Sciatic nerve (tissue), 2 donors: ENCODE measurements at regions of chr21 and their contacts with region 1.

Region 1: GRCh38 chr21:42760951-42761680 is 107.7 kb downstream of the PDE9A start:
- DNase-seq: no peak
- ATAC-seq: no peak

Region 2: DNA sequence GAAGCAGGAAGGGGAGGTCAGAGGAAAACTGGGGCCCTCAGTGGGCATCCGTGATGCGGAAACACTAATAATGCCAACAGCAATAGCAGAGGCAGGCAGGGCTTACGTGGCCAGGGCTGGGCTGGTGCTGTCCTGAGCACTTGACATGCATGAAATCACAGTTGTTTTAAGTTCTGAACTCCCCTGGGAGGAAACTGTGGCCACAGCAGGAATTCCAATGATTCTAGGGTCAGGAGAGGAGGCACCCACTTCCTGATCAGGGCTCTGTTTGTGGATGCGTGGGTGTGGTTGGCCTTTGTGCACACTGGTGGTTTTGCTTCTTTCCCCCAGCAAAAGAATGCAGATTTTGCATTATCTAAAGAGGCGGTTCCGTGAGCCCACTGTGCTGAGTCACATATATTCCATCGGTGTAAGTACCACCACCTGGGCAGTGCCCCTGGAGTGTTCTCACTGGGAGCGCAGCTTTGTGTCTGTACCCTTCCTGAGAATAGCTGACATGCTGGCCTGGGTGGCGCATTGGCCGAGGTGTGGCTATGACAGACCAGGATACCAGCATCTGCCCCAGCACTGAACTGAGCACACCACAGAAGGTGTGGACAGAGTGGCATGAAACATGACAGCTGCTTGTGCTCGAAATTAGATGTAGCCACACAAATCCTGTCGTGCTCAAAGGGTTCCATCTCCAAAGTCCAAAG is 36.7 kb before region 1 on chr21:
- intact Hi-C with region 1: loop called (anchors 1 kb)
- DNase-seq: no peak
- ATAC-seq: peak; percentile 61